Activated naive CD8-positive, alpha-beta T cell treated with anti-CD3 and anti-CD28 coated beads, Interleukin-2, amount 10 ng/mL, durations not matched to agents 7 days and 5 days (primary cell): ENCODE measurements at regions of chr14 and their contacts with region 1.

Region 1: DNA sequence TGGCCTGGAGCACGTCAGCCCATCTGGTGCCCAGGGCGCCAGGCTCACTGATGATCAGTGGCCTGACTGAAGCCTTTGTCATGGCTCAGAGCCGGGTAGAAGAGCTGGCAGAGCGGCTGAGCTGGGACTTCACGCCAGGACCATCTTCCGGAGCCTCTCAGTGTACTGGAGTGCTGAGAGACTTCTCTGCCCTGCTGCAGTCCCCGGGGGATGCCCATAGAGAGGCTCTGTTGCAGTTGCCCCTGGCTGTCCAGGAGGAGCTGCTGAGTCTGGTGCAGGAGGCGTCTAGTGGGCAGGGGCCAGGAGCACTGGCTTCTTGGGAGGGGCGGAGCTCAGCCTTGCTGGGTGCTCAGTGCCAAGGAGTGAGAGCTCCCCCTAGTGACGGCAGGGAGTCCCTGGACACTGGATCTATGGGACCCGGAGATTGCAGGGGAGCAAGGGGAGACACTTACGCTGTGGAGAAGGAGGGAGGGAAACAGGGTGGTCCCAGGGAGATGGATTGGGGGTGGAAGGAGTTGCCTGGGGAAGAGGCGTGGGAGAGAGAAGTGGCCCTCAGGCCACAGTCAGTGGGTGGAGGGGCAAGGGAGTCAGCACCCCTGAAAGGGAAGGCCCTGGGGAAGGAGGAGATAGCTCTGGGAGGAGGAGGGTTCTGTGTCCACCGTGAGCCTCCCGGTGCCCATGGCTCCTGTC is 2.0 kb downstream of the KHNYN start:
- DNase-seq: peak; percentile 85
- ATAC-seq: peak; percentile 61
- H3K4me3 Mint-ChIP-seq: peak overlapping the region; percentile 95
- H3K27ac Mint-ChIP-seq: peak overlapping the region; percentile 97
- H3K4me1 Mint-ChIP-seq: peaks cover 34% of the 10 kb centered on the region
- H3K27me3 Mint-ChIP-seq: no peaks in the 10 kb centered on the region

Region 2: DNA sequence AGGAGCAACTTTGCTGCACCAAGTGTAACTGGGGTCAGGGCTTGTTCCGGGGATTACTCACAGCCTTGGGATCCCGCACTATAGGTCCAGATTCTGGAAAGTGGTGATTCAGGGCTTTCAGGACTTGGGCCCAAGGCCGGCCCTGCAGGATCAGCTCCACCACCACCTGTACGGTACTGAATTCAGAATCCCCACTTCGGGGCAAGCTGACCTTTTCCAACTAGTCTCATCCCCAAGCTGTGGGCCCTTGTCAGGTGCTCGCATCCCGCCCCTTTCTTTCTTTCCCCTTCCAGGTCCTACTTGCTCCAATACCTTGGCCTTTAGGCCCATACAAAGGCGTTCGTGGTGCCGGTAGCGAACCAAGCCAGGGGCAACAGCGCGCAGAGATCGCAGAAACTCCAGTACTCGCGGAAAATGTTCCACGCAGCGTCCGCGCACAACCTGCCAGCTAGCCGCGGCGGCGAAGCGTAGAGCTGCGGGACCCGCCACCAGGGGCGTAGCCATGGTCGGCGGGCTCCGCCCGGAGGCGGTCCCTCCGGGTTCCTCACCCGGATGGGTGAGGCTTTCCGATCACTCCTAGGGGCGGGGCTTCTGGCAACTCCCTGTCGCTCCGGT is 189.8 kb before region 1 on chr14:
- POLR2A ChIA-PET with region 1: interaction called, 27 read pairs
- DNase-seq: peak; percentile 95
- ATAC-seq: peak; percentile 82
- H3K4me3 Mint-ChIP-seq: peak overlapping the region; percentile 85
- H3K27ac Mint-ChIP-seq: peak overlapping the region; percentile 99
- H3K4me1 Mint-ChIP-seq: peaks cover 42% of the 10 kb centered on the region
- H3K27me3 Mint-ChIP-seq: no peaks in the 10 kb centered on the region

Region 3: DNA sequence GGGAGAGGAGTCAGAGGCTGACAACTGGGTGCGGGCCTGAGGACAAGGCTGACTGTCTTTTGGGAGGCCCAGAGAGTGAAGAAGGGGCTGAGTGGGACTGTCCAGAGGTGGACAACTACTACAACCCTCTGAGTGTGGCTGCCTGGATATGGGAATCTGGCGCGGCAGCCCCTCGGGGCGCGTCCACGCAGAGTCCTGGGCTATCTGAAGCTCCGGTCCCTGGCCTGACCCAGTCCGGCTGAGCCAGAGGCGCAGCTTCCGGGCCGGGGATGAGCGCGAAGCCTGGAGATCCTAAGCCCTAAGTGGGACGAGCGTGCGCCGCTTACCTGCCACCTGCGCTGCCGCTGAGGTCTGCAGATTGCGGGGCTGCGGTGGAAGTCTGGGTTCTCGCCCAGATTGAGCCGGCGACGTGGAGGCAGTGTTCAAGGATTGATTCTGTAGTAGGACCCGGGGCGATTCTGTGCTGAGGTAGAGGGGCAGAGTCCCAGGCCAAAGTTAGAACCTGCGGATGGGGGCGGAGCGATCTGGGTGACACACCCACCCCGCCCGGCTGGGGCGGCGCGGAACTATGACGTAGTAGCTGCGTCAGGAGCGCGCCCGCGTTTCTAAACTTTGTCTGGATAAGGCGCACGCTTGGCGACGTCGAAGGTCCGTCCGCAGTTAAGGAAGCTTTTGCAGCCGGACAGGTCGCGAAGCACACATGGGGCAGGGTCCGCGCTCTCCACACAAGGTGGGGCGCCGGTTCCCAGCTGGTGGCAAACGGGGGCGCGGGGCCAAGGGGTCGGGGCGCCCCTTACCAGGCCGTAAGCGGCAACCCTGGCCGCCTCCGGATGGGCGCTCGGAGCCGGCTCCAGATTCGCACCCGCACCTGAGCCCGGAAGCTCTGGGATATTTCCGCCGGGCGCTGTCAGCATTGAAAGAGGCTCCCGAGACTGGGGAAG is 132.2 kb before region 1 on chr14 and contains the starts of genes DHRS1 and NOP9:
- POLR2A ChIA-PET with region 1: interaction called, 18 read pairs
- DNase-seq: peak; percentile 97
- ATAC-seq: peak; percentile 82
- H3K4me3 Mint-ChIP-seq: peak within 1 kb of the TSS; percentile 94
- H3K27ac Mint-ChIP-seq: peak within 1 kb of the TSS; percentile 95
- H3K4me1 Mint-ChIP-seq: peaks cover 41% of the 10 kb centered on the region
- H3K27me3 Mint-ChIP-seq: no peaks in the 10 kb centered on the region
- total RNA-seq, gene DHRS1: 36.0 to 41.9 TPM
- total RNA-seq, gene NOP9: 28.7 to 31.1 TPM

Region 4: GRCh38 chr14:24327303-24327702 is 104.4 kb before region 1 on chr14:
- POLR2A ChIA-PET with region 1: interaction called, 135 read pairs
- DNase-seq: peak; percentile 32
- ATAC-seq: no peak
- H3K4me3 Mint-ChIP-seq: peak overlapping the region; percentile 65
- H3K27ac Mint-ChIP-seq: peak overlapping the region; percentile 86
- H3K4me1 Mint-ChIP-seq: peaks cover 41% of the 10 kb centered on the region
- H3K27me3 Mint-ChIP-seq: peaks cover 9% of the 10 kb centered on the region

Region 5: GRCh38 chr14:24339284-24340151 is 92.2 kb before region 1 on chr14 and contains the start of gene RIPK3:
- POLR2A ChIA-PET with region 1: interaction called, 135 read pairs
- DNase-seq: peak; percentile 76
- ATAC-seq: peak; percentile 93
- H3K4me3 Mint-ChIP-seq: peak within 1 kb of the TSS; percentile 94
- H3K27ac Mint-ChIP-seq: peak within 1 kb of the TSS; percentile 90
- H3K4me1 Mint-ChIP-seq: peaks cover 18% of the 10 kb centered on the region
- H3K27me3 Mint-ChIP-seq: peaks cover 23% of the 10 kb centered on the region
- total RNA-seq, gene RIPK3: 41.1 to 43.7 TPM

Region 6: GRCh38 chr14:24442273-24443052 is 10.7 kb after region 1 on chr14 and contains the start of gene SDR39U1:
- POLR2A ChIA-PET with region 1: interaction called, 68 read pairs
- DNase-seq: peak; percentile 88
- ATAC-seq: peak; percentile 95
- H3K4me3 Mint-ChIP-seq: peak within 1 kb of the TSS; percentile 90
- H3K27ac Mint-ChIP-seq: peak within 1 kb of the TSS; percentile 98
- H3K4me1 Mint-ChIP-seq: peaks cover 33% of the 10 kb centered on the region
- H3K27me3 Mint-ChIP-seq: no peaks in the 10 kb centered on the region
- total RNA-seq, gene SDR39U1: 75.7 to 79.5 TPM